ENCODE measurements at regions of chr7 and their contacts with region 1.

Region 1: GRCh38 chr7:130961128-130961601 is 227.2 kb upstream of the KLF14 start:
- DNase-seq: peak; percentile 91
- H3K4me3 Mint-ChIP-seq: peak overlapping the region; percentile 76
- H3K27ac Mint-ChIP-seq: peak overlapping the region; percentile 94
- H3K4me1 Mint-ChIP-seq: peaks cover 48% of the 10 kb centered on the region
- H3K27me3 Mint-ChIP-seq: no peaks in the 10 kb centered on the region
- CTCF ChIP-seq: no peak

Region 2: GRCh38 chr7:130875265-130875741 is 85.9 kb before region 1 on chr7:
- CTCF ChIA-PET with region 1: interaction called, 13 read pairs
- POLR2A ChIA-PET with region 1: interaction called, 3 read pairs
- intact Hi-C with region 1: no loop called
- DNase-seq: peak; percentile 69
- H3K4me3 Mint-ChIP-seq: no peak overlapping the region
- H3K27ac Mint-ChIP-seq: peak overlapping the region; percentile 89
- H3K4me1 Mint-ChIP-seq: peaks cover 41% of the 10 kb centered on the region
- H3K27me3 Mint-ChIP-seq: no peaks in the 10 kb centered on the region
- CTCF ChIP-seq: peak; percentile 92

Region 3: GRCh38 chr7:130904031-130904757 is 57.0 kb before region 1 on chr7:
- CTCF ChIA-PET with region 1: interaction called, 16 read pairs
- POLR2A ChIA-PET with region 1: interaction called, 93 read pairs
- intact Hi-C with region 1: loop called (anchors 2 kb)
- DNase-seq: peak; percentile 96
- H3K4me3 Mint-ChIP-seq: peak overlapping the region; percentile 59
- H3K27ac Mint-ChIP-seq: peak overlapping the region; percentile 97
- H3K4me1 Mint-ChIP-seq: peaks cover 66% of the 10 kb centered on the region
- H3K27me3 Mint-ChIP-seq: no peaks in the 10 kb centered on the region
- CTCF ChIP-seq: no peak

Region 4: GRCh38 chr7:130929896-130930659 is 31.1 kb before region 1 on chr7:
- CTCF ChIA-PET with region 1: interaction called, 5 read pairs
- POLR2A ChIA-PET with region 1: interaction called, 17 read pairs
- intact Hi-C with region 1: no loop called
- DNase-seq: no peak
- H3K4me3 Mint-ChIP-seq: no peak overlapping the region
- H3K27ac Mint-ChIP-seq: peak overlapping the region; percentile 79
- H3K4me1 Mint-ChIP-seq: peaks cover 33% of the 10 kb centered on the region
- H3K27me3 Mint-ChIP-seq: no peaks in the 10 kb centered on the region
- CTCF ChIP-seq: no peak

Region 5: DNA sequence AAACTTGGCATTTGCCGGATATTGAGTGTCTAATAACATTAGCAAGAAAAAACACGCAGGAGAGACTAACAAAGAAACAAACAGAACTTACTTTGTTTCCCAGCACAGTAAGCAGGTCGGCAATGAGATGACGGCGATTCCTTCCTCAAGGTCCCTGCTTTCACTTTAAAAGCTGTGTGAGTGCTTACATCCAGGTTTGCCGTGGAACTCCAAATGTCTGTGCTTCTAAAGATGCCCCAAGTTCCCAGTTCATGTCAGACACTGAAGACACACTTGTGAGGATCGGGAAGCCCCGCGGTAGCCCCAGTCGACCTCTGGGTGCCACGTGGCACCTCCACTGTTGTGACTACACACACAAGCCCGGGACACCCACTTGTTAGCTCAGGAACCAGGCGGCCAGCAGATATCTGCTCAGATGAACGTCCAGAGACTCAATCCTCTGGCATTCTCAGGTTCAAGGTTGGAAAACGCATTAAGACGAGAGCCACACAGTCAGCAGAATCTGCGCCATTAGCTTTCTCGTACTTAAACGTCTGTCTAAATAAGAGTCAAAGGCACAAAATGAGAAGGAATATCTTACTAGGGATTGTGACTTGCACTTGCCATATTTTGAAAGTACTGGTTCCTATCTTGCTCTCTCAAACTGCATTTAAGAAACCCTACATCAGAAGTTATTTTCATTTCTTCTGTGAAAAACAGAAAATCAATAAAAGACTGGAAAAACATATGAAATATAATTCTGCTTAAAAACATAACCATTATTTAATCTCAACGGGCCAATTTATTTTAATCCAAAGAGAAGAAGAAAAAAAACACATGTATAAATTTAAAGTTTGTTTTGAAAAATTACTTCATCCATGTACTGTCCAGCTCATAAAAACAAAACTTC is 19.6 kb before region 1 on chr7:
- CTCF ChIA-PET with region 1: interaction called, 87 read pairs
- POLR2A ChIA-PET with region 1: interaction called, 178 read pairs
- intact Hi-C with region 1: no loop called
- DNase-seq: peak; percentile 41
- H3K4me3 Mint-ChIP-seq: peak overlapping the region; percentile 76
- H3K27ac Mint-ChIP-seq: peak overlapping the region; percentile 90
- H3K4me1 Mint-ChIP-seq: peaks cover 70% of the 10 kb centered on the region
- H3K27me3 Mint-ChIP-seq: no peaks in the 10 kb centered on the region
- CTCF ChIP-seq: no peak

Region 6: DNA sequence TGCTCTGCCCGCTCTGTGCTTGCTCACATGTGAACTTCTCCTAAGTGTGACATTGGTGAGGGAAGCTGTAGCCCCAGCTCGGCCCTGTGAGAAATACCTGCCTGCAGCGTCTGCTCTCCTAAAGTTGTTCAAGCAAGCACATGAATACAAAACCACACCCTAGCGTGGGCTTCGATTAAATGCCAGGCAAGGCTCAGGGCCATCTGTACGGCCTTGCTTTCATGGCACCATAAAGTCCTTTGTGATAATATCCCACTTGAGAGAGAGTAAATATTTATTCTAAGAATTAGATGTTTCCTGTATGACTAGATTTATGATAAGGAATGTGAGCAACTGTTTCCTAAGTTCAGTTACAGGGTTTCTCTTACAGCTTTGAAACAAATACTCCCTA is 35.7 kb after region 1 on chr7:
- CTCF ChIA-PET with region 1: interaction called, 10 read pairs
- POLR2A ChIA-PET with region 1: interaction called, 57 read pairs
- intact Hi-C with region 1: no loop called
- DNase-seq: peak; percentile 73
- H3K4me3 Mint-ChIP-seq: peak overlapping the region; percentile 21
- H3K27ac Mint-ChIP-seq: peak overlapping the region; percentile 96
- H3K4me1 Mint-ChIP-seq: peaks cover 54% of the 10 kb centered on the region
- H3K27me3 Mint-ChIP-seq: no peaks in the 10 kb centered on the region
- CTCF ChIP-seq: no peak

Region 7: DNA sequence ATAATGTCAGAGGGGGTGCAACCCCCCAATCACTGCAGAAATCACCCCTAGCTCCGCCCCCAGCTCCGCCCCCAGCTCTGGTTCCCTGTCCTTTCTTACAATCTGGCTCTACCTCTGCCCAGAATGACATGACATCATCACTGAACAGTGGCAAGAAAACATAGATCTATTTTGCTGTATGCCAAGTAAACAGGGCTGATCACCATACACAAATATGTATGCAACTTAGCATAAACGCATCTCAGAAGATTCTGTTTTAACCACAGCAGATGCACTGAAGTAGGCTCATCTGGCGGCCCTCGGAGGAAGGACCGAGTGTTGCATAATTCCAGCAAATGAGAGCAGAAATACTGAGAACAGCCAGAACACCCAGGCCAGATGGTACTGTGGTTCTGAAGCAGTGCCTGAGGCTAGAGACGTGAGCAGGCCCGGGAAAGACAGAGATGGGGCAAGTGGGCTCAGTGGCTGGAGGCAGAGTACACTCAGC is 66.2 kb after region 1 on chr7:
- CTCF ChIA-PET with region 1: interaction called, 3 read pairs
- POLR2A ChIA-PET with region 1: interaction called, 8 read pairs
- intact Hi-C with region 1: loop called (anchors 5 kb)
- DNase-seq: peak; percentile 89
- H3K4me3 Mint-ChIP-seq: peak overlapping the region; percentile 64
- H3K27ac Mint-ChIP-seq: peak overlapping the region; percentile 88
- H3K4me1 Mint-ChIP-seq: peaks cover 31% of the 10 kb centered on the region
- H3K27me3 Mint-ChIP-seq: no peaks in the 10 kb centered on the region
- CTCF ChIP-seq: no peak